H1 (cell line): ENCODE measurements at regions of chr5 and their contacts with region 1.

Region 1: GRCh38 chr5:176660860-176661641 is 13.8 kb downstream of the TSPAN17 start:
- DNase-seq: peak; percentile 80 to 89
- H3K4me3 ChIP-seq: no peak overlapping the region
- H3K27ac ChIP-seq: no peak overlapping the region
- H3K4me1 ChIP-seq: peaks cover 0 to 12% (median 8%) of the 10 kb centered on the region in 4 experiments; a peak in 6 of 7 replicates
- H3K27me3 ChIP-seq: no peaks in the 10 kb centered on the region
- CTCF ChIP-seq: peak in 2 of 3 experiments; percentile 98 to 99; a peak in 3 of 4 replicates
- EP300 ChIP-seq: no peak
- POLR2A ChIP-seq: no peak
- RAD21 ChIP-seq: peak; percentile 100

Region 2: GRCh38 chr5:176400382-176401156 is 260.5 kb before region 1 on chr5:
- CTCF ChIA-PET with region 1: no interaction called
- POLR2A ChIA-PET with region 1: no interaction called
- DNase-seq: no peak
- H3K4me3 ChIP-seq: no peak overlapping the region
- H3K27ac ChIP-seq: no peak overlapping the region
- H3K4me1 ChIP-seq: no peaks in the 10 kb centered on the region
- H3K27me3 ChIP-seq: no peaks in the 10 kb centered on the region
- CTCF ChIP-seq: no peak
- EP300 ChIP-seq: no peak
- POLR2A ChIP-seq: no peak
- RAD21 ChIP-seq: no peak

Region 3: GRCh38 chr5:176716320-176716719 is 55.3 kb after region 1 on chr5:
- CTCF ChIA-PET with region 1: interaction called, 61 read pairs
- POLR2A ChIA-PET with region 1: no interaction called
- DNase-seq: no peak
- H3K4me3 ChIP-seq: no peak overlapping the region
- H3K27ac ChIP-seq: no peak overlapping the region
- H3K4me1 ChIP-seq: peaks cover 0 to 11% (median 5%) of the 10 kb centered on the region in 4 experiments; a peak in 4 of 7 replicates
- H3K27me3 ChIP-seq: no peaks in the 10 kb centered on the region; a peak in 2 of 7 replicates
- CTCF ChIP-seq: no peak
- EP300 ChIP-seq: no peak
- POLR2A ChIP-seq: no peak
- RAD21 ChIP-seq: no peak

Region 4: DNA sequence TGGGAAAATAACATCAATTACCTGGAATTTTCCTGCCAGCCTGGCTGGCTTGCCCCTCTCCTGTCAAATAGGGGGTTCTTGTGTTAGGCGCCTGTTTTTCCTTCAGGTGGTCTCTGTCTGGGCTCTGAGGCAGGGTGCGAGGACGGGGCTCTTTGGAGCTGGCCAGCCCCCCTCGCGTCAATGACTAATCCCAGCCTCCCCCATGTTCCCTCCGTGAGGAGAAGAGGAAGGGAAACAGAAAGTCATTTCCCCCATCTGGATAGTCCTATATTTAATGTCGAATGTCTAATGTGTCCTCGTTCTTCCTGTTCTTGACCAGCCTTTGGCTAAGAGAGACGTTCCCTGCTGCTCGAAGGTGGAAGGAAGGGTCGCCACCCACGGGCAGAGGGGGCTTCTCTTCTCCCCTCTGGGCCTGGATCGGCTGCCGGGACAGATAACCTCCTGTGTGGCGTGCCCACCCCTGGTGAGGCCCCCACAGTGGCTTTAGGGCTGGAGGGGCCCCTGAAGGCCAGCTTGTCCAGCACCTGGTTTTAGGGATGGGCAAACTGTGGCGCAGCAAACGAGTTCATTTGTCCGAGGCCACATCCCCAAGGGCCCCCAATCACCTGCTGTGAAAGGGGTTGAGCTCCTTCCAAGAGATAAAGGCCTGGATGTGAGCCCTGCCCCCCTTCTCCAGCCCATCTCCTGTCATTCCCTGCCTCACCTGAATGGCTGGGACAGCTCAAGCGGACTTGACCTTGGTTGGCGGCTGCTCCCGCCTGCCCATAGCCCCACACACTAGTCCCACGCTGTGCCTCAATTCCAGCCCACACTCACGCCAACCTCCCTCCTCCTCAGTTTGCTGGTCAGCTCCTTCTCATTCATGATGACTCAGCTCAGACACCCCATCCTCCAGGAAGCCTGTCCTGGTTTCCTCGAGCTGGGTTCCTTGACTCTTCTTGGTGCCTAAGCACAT is 113.4 kb after region 1 on chr5:
- CTCF ChIA-PET with region 1: interaction called, 15 read pairs
- POLR2A ChIA-PET with region 1: no interaction called
- DNase-seq: peak in 1 of 2 experiments; percentile 56
- H3K4me3 ChIP-seq: peak overlapping the region in 1 of 4 experiments; percentile 1; a peak in 1 of 8 replicates
- H3K27ac ChIP-seq: no peak overlapping the region
- H3K4me1 ChIP-seq: peaks cover 7 to 15% (median 11%) of the 10 kb centered on the region in 4 experiments
- H3K27me3 ChIP-seq: peaks cover 0 to 3% (median 0%) of the 10 kb centered on the region in 4 experiments; a peak in 1 of 7 replicates
- CTCF ChIP-seq: no peak
- EP300 ChIP-seq: no peak
- POLR2A ChIP-seq: no peak
- RAD21 ChIP-seq: no peak

Region 5: GRCh38 chr5:176817841-176818377 is 156.9 kb after region 1 on chr5:
- CTCF ChIA-PET with region 1: interaction called, 38 read pairs
- POLR2A ChIA-PET with region 1: no interaction called
- DNase-seq: peak in 1 of 2 experiments; percentile 79
- H3K4me3 ChIP-seq: peak overlapping the region; percentile 28 to 66 (median 48)
- H3K27ac ChIP-seq: no peak overlapping the region
- H3K4me1 ChIP-seq: peaks cover 4 to 42% (median 19%) of the 10 kb centered on the region in 4 experiments
- H3K27me3 ChIP-seq: peaks cover 0 to 7% (median 4%) of the 10 kb centered on the region in 4 experiments; a peak in 2 of 7 replicates
- CTCF ChIP-seq: peak in 2 of 3 experiments; percentile 58 to 75; a peak in 3 of 4 replicates
- EP300 ChIP-seq: no peak
- POLR2A ChIP-seq: no peak
- RAD21 ChIP-seq: peak; percentile 51 to 63

Region 6: DNA sequence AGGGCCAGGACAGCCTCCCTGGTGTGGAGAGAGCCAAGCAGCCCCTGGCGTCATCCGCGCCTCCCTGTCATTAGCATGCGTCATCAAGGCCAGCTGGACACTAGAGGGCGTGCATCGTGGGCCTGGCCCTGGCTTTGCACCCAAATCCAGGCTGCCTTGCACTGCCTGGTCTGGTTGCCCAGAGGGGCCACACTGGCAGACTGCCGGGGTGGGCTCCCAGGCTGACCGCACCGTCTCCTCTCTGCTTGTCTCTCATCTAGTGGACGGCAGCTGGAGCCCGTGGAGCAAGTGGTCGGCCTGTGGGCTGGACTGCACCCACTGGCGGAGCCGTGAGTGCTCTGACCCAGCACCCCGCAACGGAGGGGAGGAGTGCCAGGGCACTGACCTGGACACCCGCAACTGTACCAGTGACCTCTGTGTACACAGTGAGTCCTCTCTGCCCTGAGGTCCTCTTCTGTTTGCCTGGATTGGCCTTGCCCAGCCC is 209.1 kb after region 1 on chr5:
- CTCF ChIA-PET with region 1: interaction called, 35 read pairs
- POLR2A ChIA-PET with region 1: interaction called, 3 read pairs
- DNase-seq: peak; percentile 21 to 84
- H3K4me3 ChIP-seq: no peak overlapping the region
- H3K27ac ChIP-seq: no peak overlapping the region
- H3K4me1 ChIP-seq: peaks cover 0 to 15% (median 5%) of the 10 kb centered on the region in 4 experiments; a peak in 6 of 7 replicates
- H3K27me3 ChIP-seq: no peaks in the 10 kb centered on the region
- CTCF ChIP-seq: peak in 2 of 3 experiments; percentile 80 to 92; a peak in 3 of 4 replicates
- EP300 ChIP-seq: no peak
- POLR2A ChIP-seq: no peak
- RAD21 ChIP-seq: peak; percentile 58 to 77

Region 7: GRCh38 chr5:177043958-177044357 is 382.9 kb after region 1 on chr5:
- CTCF ChIA-PET with region 1: interaction called, 10 read pairs
- POLR2A ChIA-PET with region 1: no interaction called
- DNase-seq: no peak
- H3K4me3 ChIP-seq: no peak overlapping the region
- H3K27ac ChIP-seq: no peak overlapping the region
- H3K4me1 ChIP-seq: no peaks in the 10 kb centered on the region
- H3K27me3 ChIP-seq: no peaks in the 10 kb centered on the region
- CTCF ChIP-seq: no peak
- EP300 ChIP-seq: no peak
- POLR2A ChIP-seq: no peak
- RAD21 ChIP-seq: no peak